Calu3 (cell line): ENCODE measurements at regions of chr15 and their contacts with region 1.

Region 1: GRCh38 chr15:53658827-53659555 is 100.5 kb downstream of the WDR72 start:
- DNase-seq: no peak
- H3K4me3 Mint-ChIP-seq: no peak overlapping the region
- H3K27ac Mint-ChIP-seq: no peak overlapping the region
- H3K4me1 Mint-ChIP-seq: peaks cover 8% of the 10 kb centered on the region
- H3K27me3 Mint-ChIP-seq: no peaks in the 10 kb centered on the region
- CTCF ChIP-seq: no peak

Region 2: DNA sequence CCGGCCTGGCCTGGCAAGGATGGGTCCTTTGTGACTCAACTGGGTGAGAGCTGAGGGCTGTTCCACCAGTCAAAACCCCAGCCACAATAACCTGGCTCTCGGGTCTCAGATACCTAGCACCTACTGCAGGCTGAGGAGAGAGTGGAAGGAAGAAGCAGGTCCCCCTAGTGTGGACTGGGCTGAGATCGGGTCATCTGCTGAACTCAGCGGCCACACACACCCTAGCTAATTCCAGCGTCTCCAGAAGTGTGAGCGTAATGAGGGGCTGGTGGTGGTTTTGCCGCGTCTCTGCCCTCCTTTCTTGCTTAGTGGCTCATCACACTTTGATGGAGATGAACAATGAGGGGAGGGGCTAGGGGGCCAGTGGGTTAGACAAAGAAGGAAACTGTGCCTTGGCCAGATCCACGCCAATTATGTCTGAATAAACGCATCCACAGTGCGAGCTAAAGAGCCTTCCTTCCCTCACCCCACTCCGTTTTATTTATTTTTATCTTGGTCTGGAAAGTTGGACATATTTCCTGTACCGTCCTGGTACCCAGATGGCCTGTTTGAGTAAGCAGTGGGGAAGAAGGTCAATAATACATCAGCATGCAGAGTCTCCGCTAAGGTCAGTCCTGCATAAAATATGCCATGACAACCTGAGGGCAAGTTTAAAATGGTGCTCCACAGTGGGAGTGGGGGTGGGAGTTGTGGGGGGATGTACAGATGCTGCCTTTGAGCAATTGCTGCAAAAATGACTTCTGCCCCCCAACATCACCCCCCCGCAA is 269.5 kb before region 1 on chr15:
- CTCF ChIA-PET with region 1: no interaction called
- intact Hi-C with region 1: loop called (anchors 5 kb)
- DNase-seq: no peak
- H3K4me3 Mint-ChIP-seq: no peak overlapping the region
- H3K27ac Mint-ChIP-seq: no peak overlapping the region
- H3K4me1 Mint-ChIP-seq: peaks cover 5% of the 10 kb centered on the region
- H3K27me3 Mint-ChIP-seq: no peaks in the 10 kb centered on the region
- CTCF ChIP-seq: no peak

Region 3: GRCh38 chr15:53522991-53523390 is 136.0 kb before region 1 on chr15:
- CTCF ChIA-PET with region 1: no interaction called
- intact Hi-C with region 1: loop called (anchors 5 kb)
- DNase-seq: no peak
- H3K4me3 Mint-ChIP-seq: no peak overlapping the region
- H3K27ac Mint-ChIP-seq: no peak overlapping the region
- H3K4me1 Mint-ChIP-seq: peaks cover 9% of the 10 kb centered on the region
- H3K27me3 Mint-ChIP-seq: no peaks in the 10 kb centered on the region
- CTCF ChIP-seq: no peak